PC-3 (cell line): ENCODE measurements at regions of chr16 and their contacts with region 1.

Region 1: DNA sequence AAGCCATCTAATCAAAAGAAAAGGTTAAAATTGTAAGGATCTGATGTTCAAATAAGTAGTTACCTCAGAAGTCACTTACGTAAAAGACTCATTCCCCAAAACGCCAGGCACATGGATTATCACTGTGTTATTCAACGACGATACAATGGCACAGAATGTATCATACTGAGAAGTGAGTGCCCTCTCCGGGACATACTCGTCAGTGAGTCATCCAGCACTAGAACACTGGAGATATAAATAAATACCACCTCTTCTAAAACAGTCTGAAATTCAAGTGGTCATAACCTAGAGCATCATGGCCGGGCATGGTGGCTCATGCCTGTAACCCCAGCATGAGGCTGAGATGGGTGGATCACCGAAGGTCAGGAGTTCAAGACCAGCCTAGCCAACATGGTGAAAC is 24.9 kb downstream of the USP31 start:
- DNase-seq: peak; percentile 68
- ATAC-seq: peak; percentile 89
- H3K4me3 ChIP-seq: no peak overlapping the region
- H3K27ac ChIP-seq: no peak overlapping the region
- H3K4me1 ChIP-seq: peaks cover 3% of the 10 kb centered on the region; the same call in 1 of the 2 replicates
- H3K27me3 ChIP-seq: no peaks in the 10 kb centered on the region
- CTCF ChIP-seq: no peak

Region 2: DNA sequence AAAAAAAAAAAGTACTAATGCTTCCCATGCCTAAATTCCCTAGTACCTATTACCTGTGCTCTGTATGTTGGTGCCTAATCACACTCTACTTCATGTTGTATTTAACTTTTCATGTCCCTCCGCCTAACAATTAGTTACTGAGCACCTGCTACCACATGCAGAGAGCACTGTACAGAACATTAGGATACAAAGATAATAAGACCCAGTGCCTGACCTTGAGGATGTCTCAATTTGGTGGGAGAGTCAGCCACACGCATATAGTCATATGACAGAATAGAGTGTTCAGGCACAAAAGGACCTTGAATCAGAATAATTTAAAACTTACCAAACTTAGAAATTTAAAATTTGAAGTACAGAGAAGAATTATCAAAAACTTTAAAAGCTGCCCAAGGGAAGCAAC is 17.2 kb before region 1 on chr16:
- CTCF ChIA-PET with region 1: interaction called, 14 read pairs
- POLR2A ChIA-PET with region 1: no interaction called
- intact Hi-C with region 1: no loop called
- DNase-seq: no peak
- ATAC-seq: no peak
- H3K4me3 ChIP-seq: no peak overlapping the region
- H3K27ac ChIP-seq: no peak overlapping the region
- H3K4me1 ChIP-seq: no peaks in the 10 kb centered on the region
- H3K27me3 ChIP-seq: no peaks in the 10 kb centered on the region
- CTCF ChIP-seq: no peak

Region 3: GRCh38 chr16:23348579-23349469 is 224.5 kb after region 1 on chr16:
- CTCF ChIA-PET with region 1: no interaction called
- POLR2A ChIA-PET with region 1: no interaction called
- intact Hi-C with region 1: no loop called
- DNase-seq: no peak
- ATAC-seq: no peak
- H3K4me3 ChIP-seq: no peak overlapping the region
- H3K27ac ChIP-seq: no peak overlapping the region
- H3K4me1 ChIP-seq: no peaks in the 10 kb centered on the region
- H3K27me3 ChIP-seq: no peaks in the 10 kb centered on the region
- CTCF ChIP-seq: no peak; the same call in 1 of the 2 replicates

Region 4: DNA sequence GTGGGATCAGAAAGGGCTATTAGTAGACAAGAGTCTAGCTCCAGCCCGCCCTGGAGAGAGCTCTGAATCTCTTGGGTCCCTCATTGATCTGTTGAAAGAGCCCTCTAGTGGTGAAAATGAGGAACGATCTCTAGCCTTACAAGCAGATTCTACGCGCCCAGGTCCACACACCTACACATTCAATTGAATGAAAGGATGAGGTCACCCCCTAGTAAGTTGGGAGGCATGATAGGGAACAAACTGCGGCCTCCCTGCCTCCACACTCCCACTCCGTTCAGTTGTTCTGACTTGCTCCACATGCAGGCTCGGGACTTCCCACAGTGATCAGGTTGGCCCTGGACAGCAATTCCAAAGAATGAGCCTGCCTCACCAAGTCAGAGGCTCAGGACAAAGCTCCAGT is 1128.9 kb after region 1 on chr16:
- CTCF ChIA-PET with region 1: interaction called, 10 read pairs
- POLR2A ChIA-PET with region 1: no interaction called
- intact Hi-C with region 1: no loop called
- DNase-seq: peak; percentile 51
- ATAC-seq: peak; percentile 48
- H3K4me3 ChIP-seq: no peak overlapping the region
- H3K27ac ChIP-seq: no peak overlapping the region
- H3K4me1 ChIP-seq: no peaks in the 10 kb centered on the region
- H3K27me3 ChIP-seq: peaks cover 16% of the 10 kb centered on the region
- CTCF ChIP-seq: peak; percentile 60